ENCODE measurements at regions of chr7 and their contacts with region 1.

Region 1: GRCh38 chr7:112495810-112496462 is 15.1 kb downstream of the LSMEM1 start:
- DNase-seq: peak in 1 of 2 experiments; percentile 23
- H3K4me3 ChIP-seq: no peak overlapping the region
- H3K27ac ChIP-seq: no peak overlapping the region
- H3K4me1 ChIP-seq: no peaks in the 10 kb centered on the region
- H3K27me3 ChIP-seq: no peaks in the 10 kb centered on the region; a peak in 1 of 7 replicates
- CTCF ChIP-seq: peak in 2 of 3 experiments; percentile 71 to 73; a peak in 3 of 4 replicates
- EP300 ChIP-seq: no peak
- POLR2A ChIP-seq: no peak
- RAD21 ChIP-seq: peak; percentile 89 to 94

Region 2: DNA sequence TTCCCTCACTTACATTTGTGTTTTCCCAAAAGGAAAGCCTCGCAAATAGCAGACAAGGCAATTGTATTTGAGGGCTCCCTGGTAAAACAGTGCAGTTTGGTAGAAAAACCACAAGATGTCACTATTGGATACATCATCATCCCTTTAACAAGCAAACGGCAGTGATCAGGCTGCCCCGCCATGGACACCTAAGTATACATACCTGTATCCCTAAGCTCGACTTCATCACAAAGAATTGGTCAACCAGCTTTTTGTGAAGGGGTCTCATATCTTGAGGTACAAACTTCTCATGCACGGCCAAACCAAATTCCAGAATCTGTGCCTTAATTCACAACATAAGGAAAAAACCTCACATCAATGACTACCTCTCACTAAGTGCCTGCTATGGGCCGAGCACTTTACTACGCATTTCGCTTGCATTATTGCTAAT is 754.1 kb before region 1 on chr7:
- CTCF ChIA-PET with region 1: interaction called, 20 read pairs
- POLR2A ChIA-PET with region 1: no interaction called
- DNase-seq: no peak
- H3K4me3 ChIP-seq: no peak overlapping the region
- H3K27ac ChIP-seq: no peak overlapping the region
- H3K4me1 ChIP-seq: peaks cover 0 to 9% (median 0%) of the 10 kb centered on the region in 4 experiments; a peak in 1 of 7 replicates
- H3K27me3 ChIP-seq: no peaks in the 10 kb centered on the region
- CTCF ChIP-seq: peak in 2 of 3 experiments; percentile 79 to 87; a peak in 3 of 4 replicates
- EP300 ChIP-seq: no peak
- POLR2A ChIP-seq: no peak
- RAD21 ChIP-seq: peak; percentile 86 to 91

Region 3: DNA sequence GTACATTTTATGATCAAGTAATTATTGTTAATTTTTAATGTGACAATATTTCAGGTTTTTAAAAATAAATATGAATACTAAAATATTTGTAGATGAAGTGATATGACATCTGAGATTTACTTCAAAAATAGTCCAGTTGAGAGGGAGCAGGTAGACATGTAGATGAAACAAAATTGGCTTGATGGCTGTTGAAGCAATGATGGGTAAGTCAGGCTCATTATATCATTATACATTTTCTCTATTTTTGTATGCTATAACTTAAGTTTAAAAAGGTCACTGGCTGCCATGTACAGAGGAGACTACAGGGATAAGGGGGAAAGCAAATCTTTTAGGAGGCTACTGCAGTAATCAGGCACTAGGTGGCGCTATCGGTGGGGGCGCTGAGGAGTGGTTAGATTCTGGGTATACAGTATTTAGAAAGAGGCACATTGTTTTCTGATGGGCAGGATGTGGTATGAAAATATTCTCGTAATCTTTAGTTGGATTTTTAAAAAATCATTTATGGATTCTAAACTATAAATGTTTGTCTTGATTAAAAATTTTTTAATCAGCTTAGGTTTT is 743.8 kb before region 1 on chr7:
- CTCF ChIA-PET with region 1: interaction called, 17 read pairs
- POLR2A ChIA-PET with region 1: no interaction called
- DNase-seq: peak in 1 of 2 experiments; percentile 86
- H3K4me3 ChIP-seq: no peak overlapping the region
- H3K27ac ChIP-seq: no peak overlapping the region
- H3K4me1 ChIP-seq: peaks cover 0 to 3% (median 0%) of the 10 kb centered on the region in 4 experiments; a peak in 3 of 7 replicates
- H3K27me3 ChIP-seq: no peaks in the 10 kb centered on the region
- CTCF ChIP-seq: peak; percentile 75 to 84 (median 84)
- EP300 ChIP-seq: no peak
- POLR2A ChIP-seq: no peak
- RAD21 ChIP-seq: peak; percentile 76 to 79

Region 4: GRCh38 chr7:112136271-112137008 is 359.5 kb before region 1 on chr7:
- CTCF ChIA-PET with region 1: no interaction called
- POLR2A ChIA-PET with region 1: no interaction called
- DNase-seq: no peak
- H3K4me3 ChIP-seq: no peak overlapping the region
- H3K27ac ChIP-seq: no peak overlapping the region
- H3K4me1 ChIP-seq: peaks cover 2 to 13% (median 7%) of the 10 kb centered on the region in 4 experiments; a peak in 4 of 7 replicates
- H3K27me3 ChIP-seq: peaks cover 0 to 1% (median 0%) of the 10 kb centered on the region in 4 experiments; a peak in 1 of 7 replicates
- CTCF ChIP-seq: no peak
- EP300 ChIP-seq: no peak
- POLR2A ChIP-seq: no peak
- RAD21 ChIP-seq: no peak

Region 5: GRCh38 chr7:112462236-112462635 is 33.7 kb before region 1 on chr7:
- CTCF ChIA-PET with region 1: interaction called, 11 read pairs
- POLR2A ChIA-PET with region 1: interaction called, 3 read pairs
- DNase-seq: no peak
- H3K4me3 ChIP-seq: no peak overlapping the region
- H3K27ac ChIP-seq: no peak overlapping the region
- H3K4me1 ChIP-seq: no peaks in the 10 kb centered on the region
- H3K27me3 ChIP-seq: no peaks in the 10 kb centered on the region
- CTCF ChIP-seq: no peak
- EP300 ChIP-seq: no peak
- POLR2A ChIP-seq: no peak
- RAD21 ChIP-seq: no peak

Region 6: GRCh38 chr7:112481833-112482670 is 13.9 kb before region 1 on chr7:
- CTCF ChIA-PET with region 1: interaction called, 39 read pairs
- POLR2A ChIA-PET with region 1: no interaction called
- DNase-seq: peak in 1 of 2 experiments; percentile 13
- H3K4me3 ChIP-seq: no peak overlapping the region
- H3K27ac ChIP-seq: no peak overlapping the region
- H3K4me1 ChIP-seq: no peaks in the 10 kb centered on the region
- H3K27me3 ChIP-seq: no peaks in the 10 kb centered on the region
- CTCF ChIP-seq: no peak
- EP300 ChIP-seq: no peak
- POLR2A ChIP-seq: no peak
- RAD21 ChIP-seq: no peak

Region 7: GRCh38 chr7:112510001-112510742 is 14.2 kb after region 1 on chr7:
- CTCF ChIA-PET with region 1: interaction called, 16 read pairs
- POLR2A ChIA-PET with region 1: no interaction called
- DNase-seq: no peak
- H3K4me3 ChIP-seq: no peak overlapping the region
- H3K27ac ChIP-seq: no peak overlapping the region
- H3K4me1 ChIP-seq: no peaks in the 10 kb centered on the region
- H3K27me3 ChIP-seq: no peaks in the 10 kb centered on the region
- CTCF ChIP-seq: no peak
- EP300 ChIP-seq: no peak
- POLR2A ChIP-seq: no peak
- RAD21 ChIP-seq: no peak

Region 8: GRCh38 chr7:112533591-112533990 is 37.7 kb after region 1 on chr7:
- CTCF ChIA-PET with region 1: no interaction called
- POLR2A ChIA-PET with region 1: no interaction called
- DNase-seq: no peak
- H3K4me3 ChIP-seq: no peak overlapping the region
- H3K27ac ChIP-seq: no peak overlapping the region
- H3K4me1 ChIP-seq: no peaks in the 10 kb centered on the region
- H3K27me3 ChIP-seq: no peaks in the 10 kb centered on the region
- CTCF ChIP-seq: no peak
- EP300 ChIP-seq: no peak
- POLR2A ChIP-seq: no peak
- RAD21 ChIP-seq: no peak

Region 9: GRCh38 chr7:112596260-112596659 is 100.3 kb after region 1 on chr7:
- CTCF ChIA-PET with region 1: no interaction called
- POLR2A ChIA-PET with region 1: no interaction called
- DNase-seq: no peak
- H3K4me3 ChIP-seq: no peak overlapping the region
- H3K27ac ChIP-seq: no peak overlapping the region
- H3K4me1 ChIP-seq: no peaks in the 10 kb centered on the region
- H3K27me3 ChIP-seq: no peaks in the 10 kb centered on the region
- CTCF ChIP-seq: no peak
- EP300 ChIP-seq: no peak
- POLR2A ChIP-seq: no peak
- RAD21 ChIP-seq: no peak

Measured in H1 (cell line).